Activated T-helper 1 cell treated with anti-CD3 and anti-CD28 coated beads, Interleukin-12 subunit alpha, Interleukin-12 subunit beta, Interleukin-2, Interleukin-4 antibody, amounts not matched to agents 30 ng/mL and 10 ng/mL and 1 ng/mL, durations not matched to agents 14 hours and 24 hours and 36 hours (primary cell): ENCODE measurements at regions of chr12 and their contacts with region 1.

Region 1: GRCh38 chr12:12562585-12563261 is at the start of gene DUSP16:
- DNase-seq: peak; percentile 85
- H3K4me3 Mint-ChIP-seq: peak within 1 kb of the TSS; percentile 88
- H3K27ac Mint-ChIP-seq: peak within 1 kb of the TSS; percentile 97
- H3K4me1 Mint-ChIP-seq: peaks cover 52% of the 10 kb centered on the region
- H3K27me3 Mint-ChIP-seq: no peaks in the 10 kb centered on the region
- total RNA-seq, gene DUSP16: 49.3 and 52.0 TPM in 2 replicates

Region 2: DNA sequence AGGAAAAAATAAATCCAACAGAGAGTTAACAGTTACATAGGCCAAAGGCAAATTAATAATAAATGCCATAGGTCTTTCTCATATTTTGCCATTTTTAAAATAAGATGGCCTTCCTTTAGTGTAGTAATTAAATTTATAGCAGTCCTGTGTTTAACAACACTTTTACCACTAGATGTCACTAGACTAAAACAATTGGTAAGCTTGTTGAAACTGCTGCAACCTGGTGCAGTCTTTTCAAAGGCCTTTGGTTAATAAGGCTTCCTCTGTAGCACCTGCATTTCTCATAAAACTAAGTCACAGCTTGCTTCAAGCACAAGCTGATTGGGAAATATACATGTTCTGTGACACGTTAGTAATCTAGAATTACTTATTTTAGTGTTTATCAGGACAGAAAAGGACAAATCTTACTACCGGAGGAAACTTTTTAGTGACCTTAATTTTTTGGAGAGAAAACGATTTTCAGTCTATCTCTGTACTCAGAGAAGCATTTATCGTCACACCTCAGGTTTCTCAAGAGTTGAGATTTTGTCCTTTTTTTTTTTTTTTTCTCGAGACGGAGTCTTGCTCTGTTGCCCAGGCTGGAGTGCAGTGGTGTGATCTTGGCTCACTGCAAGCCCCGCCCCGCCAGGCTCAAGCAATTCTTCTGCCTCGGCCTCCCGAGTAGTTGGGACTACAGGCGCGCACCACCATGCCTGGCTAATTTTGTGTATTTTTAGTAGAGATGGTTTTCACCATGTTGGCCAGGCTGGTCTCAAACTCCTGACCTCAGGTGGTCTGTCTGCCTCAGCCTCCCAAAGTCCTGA is 185.9 kb before region 1 on chr12:
- intact Hi-C with region 1: loop called (anchors 1 kb)
- DNase-seq: peak; percentile 12
- H3K4me3 Mint-ChIP-seq: no peak overlapping the region
- H3K27ac Mint-ChIP-seq: peak overlapping the region; percentile 41
- H3K4me1 Mint-ChIP-seq: peaks cover 39% of the 10 kb centered on the region
- H3K27me3 Mint-ChIP-seq: no peaks in the 10 kb centered on the region

Region 3: DNA sequence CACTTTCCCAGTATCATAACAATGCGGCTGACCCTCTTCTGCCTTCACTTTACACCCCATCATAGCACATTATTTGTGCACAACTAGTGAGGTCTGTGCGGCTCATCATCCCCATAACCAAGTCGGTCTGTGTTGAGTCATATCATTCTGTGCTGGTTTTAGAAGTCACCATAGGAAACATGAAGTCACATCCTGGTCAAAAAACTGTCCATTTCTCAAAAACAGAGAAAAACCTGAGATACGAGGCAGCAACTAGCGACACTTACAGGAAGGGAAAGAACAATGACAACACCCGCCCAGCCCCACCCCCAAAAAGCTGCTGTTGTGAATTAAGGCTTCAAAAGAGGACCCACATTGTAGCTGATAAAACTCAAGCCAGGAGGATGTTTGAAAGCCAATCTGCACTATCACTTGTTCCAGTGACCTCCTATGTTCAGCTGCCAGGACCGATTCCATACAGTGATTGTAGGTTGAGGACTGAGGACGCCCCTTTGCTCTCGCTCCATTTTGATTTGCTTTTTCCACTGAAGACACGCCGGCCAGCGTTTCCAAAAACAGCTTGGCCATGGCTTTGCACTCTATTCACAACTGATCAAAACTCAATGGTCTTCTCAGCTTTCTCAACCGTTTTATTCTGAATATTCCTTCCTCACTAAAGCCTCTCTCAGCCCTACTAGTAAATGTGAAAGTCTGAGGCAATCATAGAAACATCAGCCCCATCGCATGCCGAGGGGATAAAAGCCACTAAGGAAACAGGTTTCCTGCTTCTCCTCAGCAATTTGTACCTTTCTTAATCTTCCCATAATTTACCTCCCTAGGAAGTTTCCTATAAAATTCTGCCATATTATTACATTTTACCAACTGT is 87.6 kb before region 1 on chr12:
- intact Hi-C with region 1: loop called (anchors 1 kb)
- DNase-seq: peak; percentile 66
- H3K4me3 Mint-ChIP-seq: peak overlapping the region; percentile 60
- H3K27ac Mint-ChIP-seq: peak overlapping the region; percentile 99
- H3K4me1 Mint-ChIP-seq: peaks cover 68% of the 10 kb centered on the region
- H3K27me3 Mint-ChIP-seq: no peaks in the 10 kb centered on the region

Region 4: GRCh38 chr12:12527820-12528296 is 34.9 kb before region 1 on chr12:
- intact Hi-C with region 1: loop called (anchors 2 kb)
- DNase-seq: no peak
- H3K4me3 Mint-ChIP-seq: peak overlapping the region; percentile 57
- H3K27ac Mint-ChIP-seq: peak overlapping the region; percentile 82
- H3K4me1 Mint-ChIP-seq: peaks cover 46% of the 10 kb centered on the region
- H3K27me3 Mint-ChIP-seq: no peaks in the 10 kb centered on the region

Region 5: DNA sequence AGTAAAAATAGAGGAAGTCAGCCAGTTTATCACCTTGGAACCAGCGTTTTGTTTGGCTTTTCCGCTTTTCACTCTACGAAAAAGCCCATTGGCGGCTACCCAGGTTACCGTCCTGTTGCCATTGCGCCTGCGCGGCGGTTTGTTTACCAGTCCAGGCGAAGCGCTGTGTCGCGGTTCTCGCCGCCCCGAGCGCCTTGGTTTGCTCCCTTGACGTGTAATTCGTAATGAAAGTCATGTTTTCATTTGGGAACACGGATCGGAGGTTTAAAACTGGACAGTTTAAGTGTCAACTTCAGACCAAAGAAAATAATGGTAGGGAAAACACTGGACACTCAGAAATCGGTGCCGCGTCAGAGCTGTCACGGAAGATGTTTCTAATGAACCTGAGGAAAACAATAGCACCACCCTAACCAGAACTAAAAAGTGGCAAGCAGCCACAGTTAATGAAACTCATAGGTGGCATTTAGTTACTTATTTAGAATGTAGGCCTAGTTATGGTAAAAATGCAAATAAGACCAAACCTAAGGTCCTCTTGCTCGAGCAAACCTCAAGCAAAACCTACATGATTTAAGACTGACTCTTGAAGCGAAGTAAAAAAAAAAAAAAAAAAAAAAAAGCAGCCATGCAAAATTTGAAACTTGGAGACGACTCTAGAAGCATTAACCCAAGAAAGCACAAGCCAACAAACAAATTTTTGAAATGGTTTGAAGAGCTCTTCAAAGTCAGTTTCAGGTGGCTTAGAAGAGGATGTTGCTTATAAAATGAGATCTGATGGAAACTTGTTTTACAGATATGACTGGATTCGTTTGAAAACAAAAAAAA is 134.1 kb after region 1 on chr12:
- intact Hi-C with region 1: loop called (anchors 1 kb)
- DNase-seq: peak; percentile 91
- H3K4me3 Mint-ChIP-seq: peak overlapping the region; percentile 96
- H3K27ac Mint-ChIP-seq: peak overlapping the region; percentile 89
- H3K4me1 Mint-ChIP-seq: peaks cover 49% of the 10 kb centered on the region
- H3K27me3 Mint-ChIP-seq: no peaks in the 10 kb centered on the region